ENCODE measurements at regions of chr14 and their contacts with region 1.

Region 1: GRCh38 chr14:49867831-49868723 is 15.5 kb upstream of the NEMF start:
- DNase-seq: peak; percentile 95 to 99 (median 98)
- ATAC-seq: peak; percentile 83
- H3K4me3 ChIP-seq: peak overlapping the region; percentile 57 to 61
- H3K4me3 Mint-ChIP-seq: peak overlapping the region; percentile 91
- H3K27ac ChIP-seq: peak overlapping the region; percentile 79 to 94
- H3K27ac Mint-ChIP-seq: peak overlapping the region; percentile 92
- H3K4me1 ChIP-seq: peaks cover 34% of the 10 kb centered on the region
- H3K4me1 Mint-ChIP-seq: peaks cover 22% of the 10 kb centered on the region
- H3K27me3 ChIP-seq: no peaks in the 10 kb centered on the region
- H3K27me3 Mint-ChIP-seq: no peaks in the 10 kb centered on the region
- CTCF ChIP-seq: no peak

Region 2: GRCh38 chr14:49754570-49755097 is 113.4 kb before region 1 on chr14:
- CTCF ChIA-PET with region 1: no interaction called
- POLR2A ChIA-PET with region 1: no interaction called
- intact Hi-C with region 1: no loop called
- DNase-seq: no peak
- ATAC-seq: no peak
- H3K4me3 ChIP-seq: no peak overlapping the region
- H3K4me3 Mint-ChIP-seq: no peak overlapping the region
- H3K27ac ChIP-seq: no peak overlapping the region
- H3K27ac Mint-ChIP-seq: no peak overlapping the region
- H3K4me1 ChIP-seq: no peaks in the 10 kb centered on the region
- H3K4me1 Mint-ChIP-seq: no peaks in the 10 kb centered on the region
- H3K27me3 ChIP-seq: no peaks in the 10 kb centered on the region
- H3K27me3 Mint-ChIP-seq: no peaks in the 10 kb centered on the region
- CTCF ChIP-seq: no peak

Region 3: DNA sequence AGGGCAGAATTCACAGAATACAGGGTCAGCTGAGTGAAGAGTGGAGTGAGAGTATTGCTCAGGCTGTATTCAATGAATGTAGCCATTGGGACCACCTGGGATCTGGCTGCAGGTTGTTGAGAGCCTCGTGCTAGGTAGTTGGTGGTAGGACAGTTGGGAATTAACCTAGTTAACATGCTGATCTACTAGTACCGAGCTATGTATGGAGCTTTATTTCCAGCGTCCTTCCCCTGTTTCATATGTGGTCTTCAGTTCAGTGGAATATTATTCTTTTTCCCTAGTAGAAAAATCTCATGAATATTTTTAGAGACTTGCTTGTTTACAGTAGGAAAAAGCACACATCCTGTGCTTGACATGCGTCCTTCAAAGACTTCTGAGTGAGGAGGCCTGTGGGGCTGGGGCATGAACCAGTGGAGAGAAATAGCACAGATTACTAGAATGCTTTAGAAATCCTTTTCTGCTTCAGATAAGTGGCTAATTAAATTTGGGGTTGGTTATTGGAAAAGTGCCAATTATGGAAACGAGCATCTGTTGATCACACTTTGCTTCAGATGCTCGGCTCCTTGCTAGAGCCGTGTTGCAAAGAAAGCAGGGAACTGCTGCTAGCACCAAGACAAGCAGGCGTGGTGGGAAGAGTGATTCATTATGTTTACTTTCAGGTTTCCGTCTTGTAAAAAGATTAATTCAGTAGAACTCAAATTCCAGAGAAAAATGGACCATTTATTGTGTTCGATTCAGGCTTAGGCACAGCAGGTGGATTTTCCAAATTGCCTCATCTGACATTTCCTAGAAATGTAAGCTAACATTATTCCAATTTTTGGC is 78.5 kb after region 1 on chr14:
- CTCF ChIA-PET with region 1: interaction called, 4 read pairs
- POLR2A ChIA-PET with region 1: interaction called, 8 read pairs
- intact Hi-C with region 1: loop called in 1 of 2 experiments (anchors 1 kb)
- DNase-seq: peak in 3 of 9 experiments; percentile 19 to 45 (median 20)
- ATAC-seq: peak; percentile 56
- H3K4me3 ChIP-seq: no peak overlapping the region
- H3K4me3 Mint-ChIP-seq: peak overlapping the region; percentile 66
- H3K27ac ChIP-seq: peak overlapping the region; percentile 49 to 84
- H3K27ac Mint-ChIP-seq: peak overlapping the region; percentile 95
- H3K4me1 ChIP-seq: peaks cover 50% of the 10 kb centered on the region
- H3K4me1 Mint-ChIP-seq: peaks cover 63% of the 10 kb centered on the region
- H3K27me3 ChIP-seq: no peaks in the 10 kb centered on the region
- H3K27me3 Mint-ChIP-seq: no peaks in the 10 kb centered on the region
- CTCF ChIP-seq: no peak

Region 4: GRCh38 chr14:50003213-50004031 is 135.3 kb after region 1 on chr14:
- CTCF ChIA-PET with region 1: interaction called, 134 read pairs
- POLR2A ChIA-PET with region 1: interaction called, 73 read pairs
- intact Hi-C with region 1: loop called (anchors 1 to 2 kb)
- DNase-seq: peak; percentile 57 to 92 (median 77)
- ATAC-seq: peak; percentile 14
- H3K4me3 ChIP-seq: peak overlapping the region; percentile 44 to 56
- H3K4me3 Mint-ChIP-seq: peak overlapping the region; percentile 90
- H3K27ac ChIP-seq: peak overlapping the region; percentile 93 to 96
- H3K27ac Mint-ChIP-seq: peak overlapping the region; percentile 97
- H3K4me1 ChIP-seq: peaks cover 51% of the 10 kb centered on the region
- H3K4me1 Mint-ChIP-seq: peaks cover 56% of the 10 kb centered on the region
- H3K27me3 ChIP-seq: no peaks in the 10 kb centered on the region
- H3K27me3 Mint-ChIP-seq: no peaks in the 10 kb centered on the region
- CTCF ChIP-seq: peak; percentile 35

Region 5: DNA sequence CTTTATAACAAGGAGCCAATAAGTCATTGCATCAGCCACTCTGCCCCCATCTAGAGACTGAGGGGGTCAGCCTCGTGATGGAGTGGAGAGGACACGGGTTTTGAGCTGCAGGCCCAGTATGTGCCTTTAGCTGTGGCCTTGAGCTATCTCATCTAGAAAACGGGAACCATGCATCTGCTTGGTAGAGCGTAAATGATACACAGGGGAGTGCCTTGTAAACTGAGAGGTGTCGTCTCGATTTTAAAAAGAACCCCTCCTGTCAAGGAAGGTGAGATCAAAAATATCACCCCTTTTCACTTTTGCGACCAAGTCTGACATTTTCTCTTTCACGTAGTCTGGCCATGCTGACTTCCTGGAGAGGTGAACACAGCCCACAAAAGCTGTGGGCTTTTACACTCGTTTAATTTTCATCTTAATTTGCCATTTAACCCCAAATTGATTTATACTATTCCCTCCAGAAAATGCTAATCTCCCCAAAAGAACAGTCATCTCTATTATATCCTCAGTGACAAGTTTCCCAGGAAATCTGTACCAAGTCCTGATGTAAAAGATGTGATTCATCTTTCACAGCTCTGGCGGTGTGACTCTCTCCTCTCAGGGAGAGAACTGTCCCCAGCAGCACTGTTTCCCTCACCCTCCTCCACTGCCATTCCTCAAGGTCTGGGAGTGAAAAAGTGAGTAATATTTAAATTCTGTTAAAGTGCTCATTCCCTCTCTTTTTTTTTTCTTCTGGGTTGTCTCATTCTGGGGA is 217.7 kb after region 1 on chr14:
- CTCF ChIA-PET with region 1: interaction called, 16 read pairs
- POLR2A ChIA-PET with region 1: interaction called, 19 read pairs
- intact Hi-C with region 1: loop called in 1 of 2 experiments (anchors 2 kb)
- DNase-seq: peak in 3 of 9 experiments; percentile 28 to 81 (median 65)
- ATAC-seq: peak; percentile 2
- H3K4me3 ChIP-seq: peak overlapping the region in 1 of 2 experiments; percentile 16
- H3K4me3 Mint-ChIP-seq: peak overlapping the region; percentile 66
- H3K27ac ChIP-seq: peak overlapping the region; percentile 50 to 98
- H3K27ac Mint-ChIP-seq: peak overlapping the region; percentile 92
- H3K4me1 ChIP-seq: peaks cover 86% of the 10 kb centered on the region
- H3K4me1 Mint-ChIP-seq: peaks cover 94% of the 10 kb centered on the region
- H3K27me3 ChIP-seq: no peaks in the 10 kb centered on the region
- H3K27me3 Mint-ChIP-seq: no peaks in the 10 kb centered on the region
- CTCF ChIP-seq: no peak

Region 6: GRCh38 chr14:50116181-50116956 is 248.3 kb after region 1 on chr14 and contains the start of gene VCPKMT:
- CTCF ChIA-PET with region 1: interaction called, 13 read pairs
- POLR2A ChIA-PET with region 1: interaction called, 25 read pairs
- intact Hi-C with region 1: loop called in 1 of 2 experiments (anchors 1 kb)
- DNase-seq: peak; percentile 91 to 98 (median 96)
- ATAC-seq: peak; percentile 97
- H3K4me3 ChIP-seq: peak within 1 kb of the TSS; percentile 69 to 92
- H3K4me3 Mint-ChIP-seq: peak within 1 kb of the TSS; percentile 98
- H3K27ac ChIP-seq: peak within 1 kb of the TSS; percentile 85 to 86
- H3K27ac Mint-ChIP-seq: peak within 1 kb of the TSS; percentile 99
- H3K4me1 ChIP-seq: peaks cover 20% of the 10 kb centered on the region
- H3K4me1 Mint-ChIP-seq: peaks cover 28% of the 10 kb centered on the region
- H3K27me3 ChIP-seq: no peaks in the 10 kb centered on the region
- H3K27me3 Mint-ChIP-seq: no peaks in the 10 kb centered on the region
- CTCF ChIP-seq: no peak
- total RNA-seq, gene VCPKMT: 38.2 to 39.6 TPM

Region 7: GRCh38 chr14:50532502-50533240 is 664.6 kb after region 1 on chr14 and contains the start of gene MAP4K5:
- CTCF ChIA-PET with region 1: no interaction called
- POLR2A ChIA-PET with region 1: no interaction called
- intact Hi-C with region 1: loop called (anchors 5 kb)
- DNase-seq: peak; percentile 73 to 95 (median 88)
- ATAC-seq: peak; percentile 93
- H3K4me3 ChIP-seq: peak within 1 kb of the TSS; percentile 45 to 88
- H3K4me3 Mint-ChIP-seq: peak within 1 kb of the TSS; percentile 89
- H3K27ac ChIP-seq: peak within 1 kb of the TSS; percentile 47 to 70
- H3K27ac Mint-ChIP-seq: peak within 1 kb of the TSS; percentile 92
- H3K4me1 ChIP-seq: peaks cover 42% of the 10 kb centered on the region
- H3K4me1 Mint-ChIP-seq: peaks cover 49% of the 10 kb centered on the region
- H3K27me3 ChIP-seq: no peaks in the 10 kb centered on the region
- H3K27me3 Mint-ChIP-seq: no peaks in the 10 kb centered on the region
- CTCF ChIP-seq: peak; percentile 69
- total RNA-seq, gene MAP4K5: 32.0 to 32.7 TPM

Measured in CD8-positive, alpha-beta T cell (primary cell).